ENCODE measurements at regions of chr5 and their contacts with region 1.

Region 1: DNA sequence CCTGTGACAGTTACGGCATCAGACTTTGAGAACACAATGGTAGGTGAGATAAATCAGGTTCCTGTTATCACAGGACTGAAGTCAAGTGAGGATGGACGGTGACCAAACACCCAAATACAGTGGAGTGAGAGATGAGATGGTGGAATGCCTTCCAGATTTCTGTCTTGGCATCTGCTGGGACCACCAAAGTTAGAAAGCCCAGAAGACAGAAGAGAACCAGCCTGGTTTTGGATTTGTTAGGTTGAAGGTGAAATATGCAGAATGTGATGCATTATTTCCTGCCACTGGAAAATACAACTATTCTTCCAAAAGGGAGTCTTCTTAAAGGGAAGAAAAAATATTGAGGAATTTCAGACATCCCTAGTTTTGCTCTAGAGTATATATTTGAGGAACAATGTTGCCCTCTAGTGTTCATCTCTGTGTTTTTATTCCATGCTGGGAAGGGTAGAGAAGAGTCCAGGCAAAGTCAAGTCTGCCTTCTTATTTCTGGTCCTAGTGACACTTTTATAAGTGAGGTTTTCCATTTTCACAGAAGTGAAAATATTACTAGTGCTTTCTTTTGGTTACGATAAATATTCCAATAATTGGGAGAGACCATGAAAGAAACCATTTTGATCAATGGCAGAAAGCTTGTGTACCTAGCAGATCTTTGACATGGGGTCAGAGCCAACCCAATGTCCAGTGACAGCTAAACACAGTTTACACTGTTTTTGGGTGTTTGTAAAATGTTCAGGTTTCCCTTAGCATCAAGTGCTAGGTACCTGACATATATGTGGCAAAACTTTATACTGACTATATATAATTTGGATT is 142.3 kb upstream of the ANKH start:
- DNase-seq: no peak

Region 2: GRCh38 chr5:14008819-14009311 is 1005.0 kb before region 1 on chr5:
- intact Hi-C with region 1: loop called in 1 of 2 experiments (anchors 5 kb)
- DNase-seq: no peak

Region 3: GRCh38 chr5:14685757-14686156 is 328.1 kb before region 1 on chr5:
- intact Hi-C with region 1: loop called (anchors 5 to 10 kb)
- DNase-seq: no peak

Region 4: GRCh38 chr5:14727428-14727865 is 286.4 kb before region 1 on chr5:
- intact Hi-C with region 1: loop called (anchors 5 kb)
- DNase-seq: peak; percentile 95

Region 5: GRCh38 chr5:14895301-14895700 is 118.6 kb before region 1 on chr5:
- intact Hi-C with region 1: no loop called
- DNase-seq: no peak